ENCODE measurements at regions of chr12 and their contacts with region 1.

Region 1: DNA sequence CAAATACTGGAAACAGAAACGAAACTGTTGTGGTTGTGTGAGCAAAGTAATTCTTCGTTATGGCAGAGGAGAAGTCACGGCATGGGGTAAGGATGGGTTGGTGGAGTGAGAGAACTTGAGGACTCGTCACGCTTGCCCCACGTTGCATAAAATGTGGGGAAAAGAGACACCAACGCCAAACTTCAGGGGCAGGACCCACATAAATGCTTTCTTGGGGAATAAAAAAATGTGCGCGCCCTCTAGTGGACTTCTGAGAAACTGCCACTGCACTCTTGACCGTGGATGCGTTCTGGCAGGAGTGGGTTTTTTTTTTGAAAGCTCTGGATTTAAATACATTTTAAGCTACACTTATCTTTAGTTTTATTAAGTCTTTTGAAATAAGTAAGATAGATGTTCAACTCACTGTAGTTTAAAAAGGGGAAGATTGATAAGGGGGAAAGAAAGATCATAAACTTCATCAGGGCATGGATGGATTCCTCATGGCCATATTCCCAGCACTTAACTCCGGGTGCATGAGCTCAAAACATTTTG is 4.1 kb upstream of the IGF1 start:
- DNase-seq: peak; percentile 62 to 67
- ATAC-seq: peak; percentile 59 to 79 (median 66)
- H3K4me3 ChIP-seq: peak overlapping the region; percentile 55
- H3K27ac ChIP-seq: peak overlapping the region; percentile 41
- H3K4me1 ChIP-seq: peaks cover 9% of the 10 kb centered on the region
- H3K27me3 ChIP-seq: no peaks in the 10 kb centered on the region
- CTCF ChIP-seq: peak; percentile 96

Region 2: GRCh38 chr12:101939856-101940265 is 544.6 kb before region 1 on chr12:
- intact Hi-C with region 1: loop called (anchors 5 kb)
- DNase-seq: peak in 1 of 2 donors; percentile 25
- ATAC-seq: peak; percentile 42 to 74 (median 62)
- H3K4me3 ChIP-seq: no peak overlapping the region
- H3K27ac ChIP-seq: peak overlapping the region; percentile 61
- H3K4me1 ChIP-seq: no peaks in the 10 kb centered on the region
- H3K27me3 ChIP-seq: no peaks in the 10 kb centered on the region
- CTCF ChIP-seq: peak; percentile 70

Region 3: DNA sequence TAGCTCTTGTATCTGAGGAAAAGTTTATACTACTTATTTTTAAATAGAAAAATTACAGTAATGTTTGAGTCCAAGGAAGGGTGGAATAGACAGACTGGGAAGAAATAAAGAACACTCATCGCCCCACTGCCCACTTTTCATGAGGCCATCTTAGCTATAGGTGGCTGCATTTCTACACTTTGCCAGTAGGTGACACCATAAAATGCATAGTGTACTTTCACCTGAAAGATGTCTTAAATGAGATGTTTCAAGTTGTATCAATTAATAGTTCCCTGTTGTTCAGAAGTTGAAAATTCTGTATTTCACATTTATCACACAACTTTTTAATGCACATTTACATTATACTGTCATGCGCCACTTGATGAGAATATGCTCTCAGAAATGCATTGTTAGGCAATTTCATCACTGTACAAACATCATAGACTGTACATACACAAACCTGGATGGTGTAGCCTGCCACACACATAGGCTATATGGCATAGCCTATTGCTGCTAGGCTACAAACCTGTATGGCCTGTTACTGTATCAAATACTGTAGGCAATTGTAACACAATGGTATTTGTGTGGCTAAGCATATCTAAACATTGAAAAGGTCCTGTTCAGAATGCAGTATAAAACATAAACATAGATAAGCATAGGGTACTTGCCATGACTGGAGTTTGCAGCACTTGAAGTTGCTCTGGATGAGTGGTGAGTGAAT is 314.4 kb before region 1 on chr12:
- intact Hi-C with region 1: loop called (anchors 5 kb)
- DNase-seq: no peak
- ATAC-seq: peak in 3 of 4 donors; percentile 68 to 76 (median 69)
- H3K4me3 ChIP-seq: no peak overlapping the region
- H3K27ac ChIP-seq: no peak overlapping the region
- H3K4me1 ChIP-seq: no peaks in the 10 kb centered on the region
- H3K27me3 ChIP-seq: no peaks in the 10 kb centered on the region
- CTCF ChIP-seq: peak; percentile 85

Region 4: DNA sequence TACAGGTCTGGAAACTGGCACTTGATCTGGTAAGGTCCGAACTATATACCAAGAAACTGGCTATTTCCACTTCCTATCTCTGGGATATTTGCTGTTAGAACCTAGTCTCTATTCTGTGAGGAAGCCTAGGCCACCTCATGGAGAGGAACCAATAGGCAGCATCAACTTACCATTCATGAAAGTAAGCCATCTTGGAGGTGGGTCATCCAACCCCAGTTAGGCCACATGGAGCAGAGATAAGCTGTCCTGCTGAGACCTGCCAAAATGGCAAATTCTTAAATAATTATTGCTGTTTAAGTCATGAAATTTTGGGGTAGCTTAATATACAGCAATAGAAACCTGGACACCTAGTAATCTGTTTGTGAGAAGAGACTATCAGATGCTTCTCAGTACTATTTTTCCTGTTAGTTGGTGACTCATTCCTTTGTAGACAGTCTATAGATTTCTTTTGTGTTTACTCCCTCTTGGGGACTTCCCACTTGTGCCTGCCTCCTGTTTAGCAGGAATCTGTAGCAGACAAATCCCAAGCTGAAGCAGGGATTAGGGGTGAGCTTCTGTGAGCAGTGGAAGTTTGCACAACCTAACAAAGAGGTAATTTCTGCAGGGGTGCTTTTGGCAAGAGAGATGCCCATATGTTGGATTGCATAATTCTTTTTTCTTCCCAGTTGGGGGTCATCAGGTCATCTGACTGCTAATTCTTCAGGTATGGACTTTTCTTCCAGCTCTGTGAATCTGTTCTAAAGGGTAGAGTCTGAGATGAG is 141.0 kb before region 1 on chr12:
- intact Hi-C with region 1: loop called (anchors 5 to 10 kb)
- DNase-seq: no peak
- ATAC-seq: no peak
- H3K4me3 ChIP-seq: no peak overlapping the region
- H3K27ac ChIP-seq: peak overlapping the region; percentile 62
- H3K4me1 ChIP-seq: peaks cover 26% of the 10 kb centered on the region
- H3K27me3 ChIP-seq: no peaks in the 10 kb centered on the region
- CTCF ChIP-seq: no peak

Region 5: GRCh38 chr12:102364709-102365108 is 119.8 kb before region 1 on chr12:
- intact Hi-C with region 1: loop called in 1 of 2 experiments (anchors 5 kb)
- DNase-seq: no peak
- ATAC-seq: peak; percentile 70 to 98 (median 96)
- H3K4me3 ChIP-seq: peak overlapping the region; percentile 35
- H3K27ac ChIP-seq: peak overlapping the region; percentile 81
- H3K4me1 ChIP-seq: peaks cover 4% of the 10 kb centered on the region
- H3K27me3 ChIP-seq: no peaks in the 10 kb centered on the region
- CTCF ChIP-seq: no peak

Region 6: DNA sequence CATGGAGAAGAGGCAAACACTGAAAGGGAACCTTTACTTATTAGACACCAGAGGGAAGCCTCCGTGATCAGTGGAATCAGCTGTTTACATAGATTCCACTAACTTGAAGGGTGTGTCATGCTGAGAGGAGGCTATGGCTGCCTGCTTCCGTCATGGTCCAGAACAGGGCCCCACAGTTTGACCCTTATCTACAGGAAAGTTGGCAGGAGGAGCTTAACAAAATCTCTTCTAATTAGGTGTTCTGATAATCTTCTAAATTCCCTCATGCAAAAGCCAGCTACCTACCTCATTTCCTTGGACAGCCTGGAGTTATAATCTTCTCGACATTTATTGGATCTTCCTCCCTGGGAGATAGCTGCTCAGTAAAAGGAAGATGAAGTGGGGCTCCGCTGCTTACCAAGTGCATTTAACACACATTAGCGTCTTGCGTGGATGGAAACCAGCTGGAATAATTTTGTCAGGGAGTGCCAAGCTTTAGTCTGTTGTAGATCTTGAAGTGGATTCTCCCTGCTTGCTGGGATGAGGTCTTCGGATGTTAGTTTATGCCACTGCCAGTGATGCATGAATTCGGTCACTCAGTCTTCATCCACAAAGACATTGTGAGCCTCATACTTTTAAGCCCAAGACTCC is 261.6 kb after region 1 on chr12:
- intact Hi-C with region 1: no loop called
- DNase-seq: no peak
- ATAC-seq: no peak
- H3K4me3 ChIP-seq: no peak overlapping the region
- H3K27ac ChIP-seq: no peak overlapping the region
- H3K4me1 ChIP-seq: no peaks in the 10 kb centered on the region
- H3K27me3 ChIP-seq: no peaks in the 10 kb centered on the region
- CTCF ChIP-seq: no peak